GM23248 (cell line): ENCODE measurements at regions of chr14 and their contacts with region 1.

Region 1: DNA sequence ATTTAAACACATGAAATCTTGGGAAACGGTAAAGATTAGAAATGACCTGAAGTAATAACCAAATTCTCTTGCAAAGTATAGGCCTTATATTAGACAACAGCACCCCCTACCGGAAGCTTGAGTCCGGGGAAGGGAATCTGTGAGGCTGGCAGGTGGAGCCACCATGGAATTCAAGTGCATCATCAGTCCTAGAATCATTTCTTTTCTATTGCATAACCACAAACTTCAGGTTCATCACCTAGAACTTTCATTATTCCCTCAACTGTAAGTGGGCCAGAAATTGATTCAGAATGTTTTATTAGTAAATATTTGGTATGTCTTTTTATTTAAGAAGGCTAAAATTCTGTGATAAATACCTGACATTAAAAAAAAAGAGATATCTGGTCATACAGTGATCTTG is 48.5 kb downstream of the AP5M1 start:
- DNase-seq: peak; percentile 80
- H3K4me3 ChIP-seq: no peak overlapping the region
- H3K27ac ChIP-seq: no peak overlapping the region
- H3K4me1 ChIP-seq: no peaks in the 10 kb centered on the region
- H3K27me3 ChIP-seq: peaks cover 33% of the 10 kb centered on the region

Region 2: GRCh38 chr14:56659964-56660551 is 657.3 kb before region 1 on chr14:
- in situ Hi-C with region 1: loop called (anchors 25 kb)
- DNase-seq: peak; percentile 55
- H3K4me3 ChIP-seq: no peak overlapping the region
- H3K27ac ChIP-seq: no peak overlapping the region
- H3K4me1 ChIP-seq: no peaks in the 10 kb centered on the region
- H3K27me3 ChIP-seq: no peaks in the 10 kb centered on the region

Region 3: DNA sequence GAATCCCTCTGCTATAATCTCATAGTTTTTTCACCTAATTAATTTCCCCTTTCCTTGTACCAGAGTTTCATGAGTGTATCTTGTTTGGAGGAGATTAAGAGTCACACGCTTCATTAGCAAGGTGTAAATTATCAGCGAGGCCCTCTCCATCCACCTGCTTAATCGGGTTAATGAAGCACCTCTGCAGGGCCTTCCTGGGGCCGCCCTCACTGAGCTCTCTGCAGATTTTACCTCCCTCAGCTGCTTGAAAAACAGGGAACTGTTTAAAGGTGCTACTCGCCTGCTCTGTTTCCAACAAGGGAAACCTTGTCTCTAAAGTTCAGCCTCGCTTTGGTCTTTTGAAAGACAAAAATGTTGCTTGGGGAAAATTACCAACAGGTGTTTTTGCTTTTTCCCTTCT is 542.8 kb before region 1 on chr14:
- in situ Hi-C with region 1: no loop called
- DNase-seq: no peak
- H3K4me3 ChIP-seq: no peak overlapping the region
- H3K27ac ChIP-seq: no peak overlapping the region
- H3K4me1 ChIP-seq: no peaks in the 10 kb centered on the region
- H3K27me3 ChIP-seq: no peaks in the 10 kb centered on the region

Region 4: DNA sequence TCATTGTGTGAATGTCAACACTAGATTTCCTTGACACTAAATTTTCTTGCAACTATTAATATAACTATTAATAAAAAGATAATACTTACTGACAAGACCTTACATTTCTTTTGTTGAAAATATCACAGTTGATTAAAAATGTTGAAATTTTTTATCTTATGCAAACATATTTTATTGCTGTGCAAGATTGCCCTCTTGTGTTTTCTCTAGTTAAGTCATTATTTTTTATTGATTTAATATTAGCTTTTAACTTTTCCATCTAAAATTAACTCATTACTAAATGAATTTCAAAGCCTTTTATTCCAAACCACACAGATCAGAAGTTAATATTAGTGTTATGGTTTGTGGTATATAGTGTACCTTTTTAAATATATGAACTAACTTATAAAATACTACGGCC is 61.4 kb after region 1 on chr14:
- in situ Hi-C with region 1: no loop called
- DNase-seq: peak; percentile 38
- H3K4me3 ChIP-seq: no peak overlapping the region
- H3K27ac ChIP-seq: no peak overlapping the region
- H3K4me1 ChIP-seq: peaks cover 23% of the 10 kb centered on the region
- H3K27me3 ChIP-seq: no peaks in the 10 kb centered on the region

Region 5: GRCh38 chr14:57918791-57919190 is 601.5 kb after region 1 on chr14:
- in situ Hi-C with region 1: no loop called
- DNase-seq: no peak
- H3K4me3 ChIP-seq: no peak overlapping the region
- H3K27ac ChIP-seq: no peak overlapping the region
- H3K4me1 ChIP-seq: no peaks in the 10 kb centered on the region
- H3K27me3 ChIP-seq: no peaks in the 10 kb centered on the region; the same call in 1 of the 2 replicates